HEK293 (cell line): ENCODE measurements at regions of chr6 and their contacts with region 1.

Region 1: GRCh38 chr6:152811785-152812184 is 61.2 kb downstream of the VIP start:
- H3K4me3 ChIP-seq: no peak overlapping the region
- H3K27ac ChIP-seq: no peak overlapping the region
- H3K4me1 ChIP-seq: no peaks in the 10 kb centered on the region
- CTCF ChIP-seq: no peak

Region 2: GRCh38 chr6:152750694-152751093 is 61.1 kb before region 1 on chr6 and contains the start of gene VIP:
- CTCF ChIA-PET with region 1: no interaction called
- POLR2A ChIA-PET with region 1: interaction called, 11 read pairs
- H3K4me3 ChIP-seq: no peak within 1 kb of the TSS
- H3K27ac ChIP-seq: no peak within 1 kb of the TSS
- H3K4me1 ChIP-seq: no peaks in the 10 kb centered on the region
- CTCF ChIP-seq: no peak

Region 3: DNA sequence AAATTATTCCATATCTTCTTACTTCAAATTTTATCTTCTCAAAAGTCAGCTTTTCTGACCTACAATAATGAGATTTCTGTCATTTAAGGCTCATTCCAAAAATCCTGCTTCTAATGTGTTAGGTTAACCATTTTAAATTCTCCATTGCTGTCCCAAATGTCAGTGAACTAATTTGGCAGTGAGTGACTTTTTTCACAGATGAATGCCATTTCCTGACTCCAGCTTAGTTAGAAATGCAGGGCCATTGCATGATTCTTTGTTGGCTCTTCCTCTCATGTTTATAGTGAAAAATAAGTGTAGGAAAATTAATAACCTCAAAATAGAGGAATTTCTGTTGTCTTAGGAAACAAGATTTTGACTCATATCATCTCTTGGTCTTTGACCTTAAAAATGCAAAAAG is 17.1 kb before region 1 on chr6:
- CTCF ChIA-PET with region 1: no interaction called
- POLR2A ChIA-PET with region 1: no interaction called
- H3K4me3 ChIP-seq: no peak overlapping the region
- H3K27ac ChIP-seq: no peak overlapping the region
- H3K4me1 ChIP-seq: no peaks in the 10 kb centered on the region
- CTCF ChIP-seq: no peak

Region 4: DNA sequence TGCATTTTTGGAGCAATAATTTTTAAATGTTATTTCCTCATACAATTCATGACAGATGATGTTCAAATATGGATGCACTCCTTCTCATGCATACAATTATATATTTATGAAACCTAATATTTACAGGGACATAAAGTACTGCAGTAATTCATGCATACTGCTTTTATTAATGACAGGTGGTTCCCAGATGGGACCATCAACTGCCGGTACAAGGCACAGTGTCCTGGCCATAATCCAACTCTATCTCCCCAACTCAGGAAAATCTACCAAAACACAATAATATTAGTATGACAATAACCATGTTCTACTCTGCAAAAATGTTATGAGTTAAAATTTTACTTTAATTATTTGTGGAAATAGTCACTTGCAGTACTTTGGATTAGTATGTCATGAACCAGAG is 16.6 kb after region 1 on chr6:
- CTCF ChIA-PET with region 1: no interaction called
- POLR2A ChIA-PET with region 1: no interaction called
- H3K4me3 ChIP-seq: no peak overlapping the region
- H3K27ac ChIP-seq: no peak overlapping the region
- H3K4me1 ChIP-seq: no peaks in the 10 kb centered on the region
- CTCF ChIP-seq: no peak